Calu3 (cell line): ENCODE measurements at regions of chr2 and their contacts with region 1.

Region 1: GRCh38 chr2:185746531-185746881 is 7.9 kb downstream of the FSIP2 start:
- DNase-seq: no peak
- H3K4me3 Mint-ChIP-seq: peak overlapping the region; percentile 30
- H3K27ac Mint-ChIP-seq: peak overlapping the region; percentile 12
- H3K4me1 Mint-ChIP-seq: peaks cover 23% of the 10 kb centered on the region
- H3K27me3 Mint-ChIP-seq: no peaks in the 10 kb centered on the region
- CTCF ChIP-seq: no peak

Region 2: GRCh38 chr2:186129767-186130581 is 383.5 kb after region 1 on chr2:
- CTCF ChIA-PET with region 1: no interaction called
- intact Hi-C with region 1: loop called (anchors 10 kb)
- DNase-seq: peak; percentile 46
- H3K4me3 Mint-ChIP-seq: peak overlapping the region; percentile 26
- H3K27ac Mint-ChIP-seq: peak overlapping the region; percentile 93
- H3K4me1 Mint-ChIP-seq: peaks cover 51% of the 10 kb centered on the region
- H3K27me3 Mint-ChIP-seq: no peaks in the 10 kb centered on the region
- CTCF ChIP-seq: no peak